ENCODE measurements at regions of chr17 and their contacts with region 1.

Region 1: GRCh38 chr17:69414408-69415274 is at the start of gene MAP2K6:
- DNase-seq: peak; percentile 63
- ATAC-seq: peak; percentile 99
- H3K4me3 Mint-ChIP-seq: no peak within 1 kb of the TSS
- H3K27ac Mint-ChIP-seq: no peak within 1 kb of the TSS
- H3K4me1 Mint-ChIP-seq: peaks cover 4% of the 10 kb centered on the region
- H3K27me3 Mint-ChIP-seq: no peaks in the 10 kb centered on the region
- CTCF ChIP-seq: no peak
- total RNA-seq, gene MAP2K6: 2.6 and 2.9 TPM in 2 replicates

Region 2: DNA sequence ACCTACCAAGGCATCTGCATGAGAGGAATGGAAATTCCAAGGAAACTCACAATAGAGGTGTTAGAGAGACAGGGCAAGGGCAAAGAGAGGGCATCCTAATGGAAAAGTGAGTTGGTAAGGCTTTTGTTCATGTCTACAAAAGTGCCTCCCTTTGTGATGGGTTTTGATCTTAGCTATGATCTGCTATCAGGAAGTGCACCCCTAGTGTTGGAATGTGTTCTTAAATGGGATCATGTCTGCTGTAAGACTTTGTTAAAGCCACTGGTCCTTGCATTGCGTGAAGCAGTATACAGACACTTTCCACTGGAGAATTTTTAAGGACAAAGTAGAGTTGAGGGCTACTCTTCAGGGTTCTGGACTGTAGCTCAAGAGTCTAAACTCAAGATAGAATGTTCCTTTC is 91.8 kb after region 1 on chr17:
- CTCF ChIA-PET with region 1: no interaction called
- POLR2A ChIA-PET with region 1: interaction called, 4 read pairs
- intact Hi-C with region 1: loop called (anchors 1 kb)
- DNase-seq: no peak
- ATAC-seq: no peak
- H3K4me3 Mint-ChIP-seq: no peak overlapping the region
- H3K27ac Mint-ChIP-seq: no peak overlapping the region
- H3K4me1 Mint-ChIP-seq: peaks cover 44% of the 10 kb centered on the region
- H3K27me3 Mint-ChIP-seq: no peaks in the 10 kb centered on the region
- CTCF ChIP-seq: no peak

Region 3: GRCh38 chr17:69516911-69517310 is 102.3 kb after region 1 on chr17:
- CTCF ChIA-PET with region 1: no interaction called
- POLR2A ChIA-PET with region 1: interaction called, 6 read pairs
- intact Hi-C with region 1: loop called (anchors 2 kb)
- DNase-seq: no peak
- ATAC-seq: peak; percentile 91
- H3K4me3 Mint-ChIP-seq: peak overlapping the region; percentile 48
- H3K27ac Mint-ChIP-seq: peak overlapping the region; percentile 46
- H3K4me1 Mint-ChIP-seq: peaks cover 33% of the 10 kb centered on the region
- H3K27me3 Mint-ChIP-seq: peaks cover 17% of the 10 kb centered on the region
- CTCF ChIP-seq: no peak

Region 4: DNA sequence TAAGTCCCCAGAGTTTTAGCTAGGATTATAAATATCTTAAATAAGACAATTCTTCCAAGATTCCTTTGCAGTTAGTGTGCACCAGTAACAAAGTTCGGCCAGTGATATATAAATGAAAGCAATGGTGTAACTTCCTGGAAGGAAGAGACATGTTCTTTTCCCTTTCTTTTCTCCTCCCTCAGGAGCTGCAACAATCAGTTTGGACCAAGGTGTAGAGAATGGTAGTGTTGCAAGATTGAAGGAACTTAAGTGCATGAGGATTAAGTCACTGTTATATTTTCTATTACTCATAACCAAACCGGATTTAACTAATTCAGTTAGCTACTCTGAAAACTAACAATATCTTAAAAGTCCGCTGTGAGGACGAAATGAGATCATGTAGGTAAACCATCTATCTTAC is 591.5 kb after region 1 on chr17:
- CTCF ChIA-PET with region 1: no interaction called
- POLR2A ChIA-PET with region 1: no interaction called
- intact Hi-C with region 1: no loop called
- DNase-seq: no peak
- ATAC-seq: no peak
- H3K4me3 Mint-ChIP-seq: no peak overlapping the region
- H3K27ac Mint-ChIP-seq: no peak overlapping the region
- H3K4me1 Mint-ChIP-seq: no peaks in the 10 kb centered on the region
- H3K27me3 Mint-ChIP-seq: no peaks in the 10 kb centered on the region
- CTCF ChIP-seq: no peak

Measured in activated B cell treated with CpG ODN at 0.5 μM for 24 hours (primary cell).